RWPE1 (cell line): ENCODE measurements at regions of chr17 and their contacts with region 1.

Region 1: GRCh38 chr17:21387616-21388015 is 11.5 kb downstream of the KCNJ12 start:
- DNase-seq: no peak
- H3K27ac ChIP-seq: no peak overlapping the region
- CTCF ChIP-seq: no peak

Region 2: DNA sequence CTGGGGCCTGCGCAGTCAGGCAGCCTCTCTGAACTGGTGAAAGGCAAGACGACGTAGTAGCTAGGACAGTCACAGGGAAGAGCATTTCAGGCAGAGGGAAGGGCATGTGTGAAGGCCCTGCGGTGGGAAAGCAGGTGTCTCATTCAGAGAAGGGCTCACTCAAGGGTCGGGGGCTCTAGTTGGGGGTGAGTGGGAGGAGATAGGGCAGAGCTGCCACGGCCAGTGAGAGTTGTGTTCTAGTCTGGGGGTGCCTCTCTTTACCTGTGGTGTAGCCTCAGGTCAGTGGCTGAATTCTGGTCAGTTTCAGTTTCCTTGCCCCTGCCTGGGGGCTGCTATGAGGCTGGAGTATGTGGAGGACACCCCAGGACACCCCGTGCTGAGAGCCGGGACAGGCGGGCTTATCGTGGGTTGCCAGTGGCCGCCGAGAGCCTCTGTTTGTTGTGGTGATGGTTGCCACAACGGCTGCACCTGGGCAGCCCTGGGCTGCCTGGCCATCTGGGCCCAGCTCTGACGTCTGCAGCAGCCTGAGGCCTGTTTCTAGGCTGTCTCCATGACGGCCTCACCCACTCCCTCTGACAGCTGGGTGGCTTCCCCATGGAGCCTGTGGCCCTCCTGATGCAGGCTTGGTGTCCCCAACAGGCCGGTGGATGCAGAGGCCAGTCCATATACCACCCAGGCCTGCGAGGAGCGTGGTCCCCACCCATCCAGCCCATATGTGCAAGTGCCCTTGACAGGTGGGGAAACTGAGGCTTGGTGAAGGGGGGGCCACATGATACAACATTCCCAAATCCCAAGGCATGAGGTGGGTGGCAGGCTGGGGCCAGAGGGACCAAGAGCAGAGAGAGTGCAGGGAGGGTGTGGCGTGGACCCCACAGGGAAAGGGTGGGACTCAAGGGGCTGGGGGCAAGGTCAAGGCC is 92.3 kb before region 1 on chr17:
- CTCF ChIA-PET with region 1: no interaction called
- POLR2A ChIA-PET with region 1: interaction called, 13 read pairs
- DNase-seq: no peak
- H3K27ac ChIP-seq: peak overlapping the region; percentile 71
- CTCF ChIP-seq: no peak